Motor neuron (in vitro differentiated cells): ENCODE measurements at regions of chr1 and their contacts with region 1.

Region 1: DNA sequence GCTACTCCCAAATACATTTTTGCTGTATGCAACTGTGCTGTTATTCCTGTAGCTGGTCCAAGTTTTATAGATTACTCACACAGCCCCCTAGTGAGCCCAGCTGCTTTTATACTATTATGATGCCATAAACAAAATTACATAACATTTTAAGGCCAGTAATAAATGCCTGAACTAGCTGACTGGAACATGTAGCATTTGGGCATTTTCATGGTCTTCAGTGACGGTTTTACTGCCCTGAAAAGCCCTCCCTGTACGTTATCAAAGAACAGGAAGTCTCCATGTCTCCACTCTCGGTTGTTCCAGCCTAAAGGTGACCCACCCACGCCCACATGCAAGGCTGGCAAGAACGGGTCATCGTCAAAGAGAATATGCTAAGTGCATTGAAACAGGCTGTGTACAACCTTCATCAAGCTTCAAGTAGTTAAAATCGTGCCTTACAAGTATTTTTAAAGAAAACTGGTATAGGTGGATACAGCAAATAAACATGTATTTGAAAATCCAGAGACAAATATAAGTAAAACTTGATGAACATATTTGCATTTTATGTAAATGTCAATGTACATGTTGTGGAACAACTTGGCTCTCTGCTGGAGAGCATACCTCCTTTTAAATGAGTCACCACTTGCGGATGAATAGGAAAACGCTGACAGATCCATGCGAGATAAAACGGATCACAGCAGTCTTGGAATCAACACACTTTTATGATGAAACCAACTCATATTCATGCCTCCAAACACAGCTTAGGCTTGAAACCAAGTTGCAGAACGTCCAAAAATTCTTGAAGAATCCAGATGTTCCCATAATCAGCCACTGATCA is 520.5 kb downstream of the SMYD3 start:
- ATAC-seq: peak in 4 of 8 experiments; percentile 47 to 95 (median 90)
- H3K4me3 ChIP-seq: no peak overlapping the region
- H3K27ac ChIP-seq: no peak overlapping the region
- H3K4me1 ChIP-seq: no peaks in the 10 kb centered on the region

Region 2: DNA sequence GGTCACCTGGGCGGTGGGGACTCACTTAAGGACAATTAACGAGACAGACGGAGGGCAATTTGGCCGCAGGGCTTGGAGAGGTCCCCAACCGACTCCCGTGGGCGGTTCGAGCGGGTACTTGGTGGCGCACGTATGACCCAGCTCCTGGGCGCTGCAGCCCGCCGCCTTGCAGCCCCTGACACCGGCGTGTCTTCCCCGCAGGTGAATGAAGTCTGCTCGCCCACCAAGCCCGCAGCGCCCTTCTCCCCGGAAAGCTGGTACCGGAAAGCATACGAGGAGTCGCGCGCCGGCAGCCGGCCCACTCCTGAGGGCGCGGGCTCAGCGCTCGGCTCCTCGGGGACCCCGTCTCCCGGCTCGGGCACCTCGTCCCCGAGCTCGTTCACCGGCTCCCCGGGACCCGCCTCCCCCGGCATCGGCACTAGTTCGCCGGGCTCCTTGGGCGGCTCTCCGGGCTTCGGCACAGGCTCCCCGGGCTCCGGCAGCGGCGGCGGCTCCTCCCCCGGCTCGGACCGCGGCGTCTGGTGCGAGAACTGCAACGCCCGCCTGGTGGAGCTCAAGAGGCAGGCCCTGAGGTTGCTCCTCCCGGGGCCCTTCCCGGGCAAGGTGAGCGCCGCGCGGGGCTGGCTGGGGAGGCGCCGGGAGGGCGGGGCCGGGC is 830.4 kb before region 1 on chr1:
- in situ Hi-C with region 1: loop called in 2 of 9 experiments (anchors 25 kb)
- ATAC-seq: peak; percentile 65 to 88 (median 70)
- H3K4me3 ChIP-seq: peak overlapping the region; percentile 60 to 75 (median 68)
- H3K27ac ChIP-seq: peak overlapping the region; percentile 42 to 69
- H3K4me1 ChIP-seq: peaks cover 0 to 5% of the 10 kb centered on the region in 2 donors

Region 3: DNA sequence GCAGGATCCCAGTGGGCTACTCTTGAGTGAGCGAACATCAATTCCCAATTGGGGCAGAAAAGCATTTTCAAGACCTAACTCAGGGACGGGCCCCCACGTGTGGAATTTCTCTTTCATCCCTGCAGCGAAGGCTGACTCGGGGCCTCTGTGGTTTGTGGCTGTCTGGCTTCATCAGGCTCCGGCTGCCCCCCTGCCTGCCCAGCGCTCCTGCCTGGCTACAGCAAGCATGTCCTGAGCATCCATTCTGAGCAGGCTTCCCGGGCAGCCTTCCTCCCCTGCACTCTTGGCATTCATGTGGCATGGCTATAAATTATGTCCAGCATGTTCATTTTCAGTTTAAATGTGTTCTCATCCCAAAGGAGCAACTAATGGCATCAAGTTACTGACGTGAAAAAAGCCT is 243.7 kb before region 1 on chr1:
- in situ Hi-C with region 1: loop called in 1 of 9 experiments (anchors 25 kb)
- ATAC-seq: peak in 5 of 8 experiments; percentile 97 to 100 (median 99)
- H3K4me3 ChIP-seq: no peak overlapping the region
- H3K27ac ChIP-seq: peak overlapping the region; percentile 5 to 21
- H3K4me1 ChIP-seq: peaks cover 8 to 17% of the 10 kb centered on the region in 2 donors

Region 4: DNA sequence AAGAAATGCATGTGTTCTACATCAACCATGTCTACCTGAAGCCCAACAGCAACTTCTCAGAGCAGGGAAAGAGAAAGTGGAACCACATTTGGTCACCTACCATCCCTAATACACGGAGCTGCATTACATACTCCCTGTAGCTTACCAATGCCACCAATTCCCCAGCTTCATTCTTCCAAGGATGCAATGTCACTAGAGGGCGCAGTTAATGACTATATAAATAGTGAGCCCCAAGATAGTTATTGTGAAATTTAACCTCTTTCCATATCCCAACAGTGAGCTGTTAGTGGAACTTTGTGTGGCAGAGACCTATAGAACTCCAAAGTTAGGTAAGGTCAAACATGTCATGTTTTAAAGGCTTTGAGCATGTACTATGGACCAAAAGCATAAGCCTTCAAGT is 97.8 kb before region 1 on chr1:
- in situ Hi-C with region 1: loop called in 1 of 9 experiments (anchors 25 kb)
- ATAC-seq: peak in 2 of 8 experiments; percentile 32 to 35
- H3K4me3 ChIP-seq: no peak overlapping the region
- H3K27ac ChIP-seq: no peak overlapping the region
- H3K4me1 ChIP-seq: no peaks in the 10 kb centered on the region